Mammary epithelial cell (primary cell): ENCODE measurements at regions of chr20 and their contacts with region 1.

Region 1: GRCh38 chr20:50034567-50035208 is 51.9 kb downstream of the SNAI1 start:
- DNase-seq: peak; percentile 53
- H3K4me3 ChIP-seq: no peak overlapping the region
- H3K27ac ChIP-seq: peak overlapping the region; percentile 33
- H3K4me1 ChIP-seq: peaks cover 17% of the 10 kb centered on the region
- H3K27me3 ChIP-seq: no peaks in the 10 kb centered on the region
- CTCF ChIP-seq: no peak

Region 2: GRCh38 chr20:49999329-49999728 is 35.4 kb before region 1 on chr20:
- CTCF ChIA-PET with region 1: no interaction called
- dilution Hi-C with region 1: loop called (anchors 5 kb)
- in situ Hi-C with region 1: no loop called
- intact Hi-C with region 1: no loop called
- DNase-seq: no peak
- H3K4me3 ChIP-seq: no peak overlapping the region
- H3K27ac ChIP-seq: no peak overlapping the region
- H3K4me1 ChIP-seq: no peaks in the 10 kb centered on the region
- H3K27me3 ChIP-seq: no peaks in the 10 kb centered on the region
- CTCF ChIP-seq: no peak

Region 3: GRCh38 chr20:50067866-50068612 is 33.4 kb after region 1 on chr20:
- CTCF ChIA-PET with region 1: no interaction called
- dilution Hi-C with region 1: no loop called
- in situ Hi-C with region 1: no loop called
- intact Hi-C with region 1: no loop called
- DNase-seq: no peak
- H3K4me3 ChIP-seq: no peak overlapping the region
- H3K27ac ChIP-seq: no peak overlapping the region
- H3K4me1 ChIP-seq: no peaks in the 10 kb centered on the region
- H3K27me3 ChIP-seq: no peaks in the 10 kb centered on the region
- CTCF ChIP-seq: no peak

Region 4: GRCh38 chr20:50092436-50092835 is 57.7 kb after region 1 on chr20:
- CTCF ChIA-PET with region 1: no interaction called
- dilution Hi-C with region 1: loop called (anchors 5 kb)
- in situ Hi-C with region 1: no loop called
- intact Hi-C with region 1: no loop called
- DNase-seq: no peak
- H3K4me3 ChIP-seq: no peak overlapping the region
- H3K27ac ChIP-seq: no peak overlapping the region
- H3K4me1 ChIP-seq: peaks cover 7% of the 10 kb centered on the region
- H3K27me3 ChIP-seq: no peaks in the 10 kb centered on the region
- CTCF ChIP-seq: no peak

Region 5: GRCh38 chr20:50189681-50190582 is 155.2 kb after region 1 on chr20:
- CTCF ChIA-PET with region 1: no interaction called
- dilution Hi-C with region 1: no loop called
- in situ Hi-C with region 1: no loop called
- intact Hi-C with region 1: no loop called
- DNase-seq: peak; percentile 69
- H3K4me3 ChIP-seq: peak overlapping the region in 2 of 3 experiments; percentile 89 to 99
- H3K27ac ChIP-seq: peak overlapping the region; percentile 68
- H3K4me1 ChIP-seq: peaks cover 18% of the 10 kb centered on the region
- H3K27me3 ChIP-seq: no peaks in the 10 kb centered on the region
- CTCF ChIP-seq: peak; percentile 25 to 70